Transverse colon (tissue), 4 donors: ENCODE measurements at regions of chr9 and their contacts with region 1.

Region 1: DNA sequence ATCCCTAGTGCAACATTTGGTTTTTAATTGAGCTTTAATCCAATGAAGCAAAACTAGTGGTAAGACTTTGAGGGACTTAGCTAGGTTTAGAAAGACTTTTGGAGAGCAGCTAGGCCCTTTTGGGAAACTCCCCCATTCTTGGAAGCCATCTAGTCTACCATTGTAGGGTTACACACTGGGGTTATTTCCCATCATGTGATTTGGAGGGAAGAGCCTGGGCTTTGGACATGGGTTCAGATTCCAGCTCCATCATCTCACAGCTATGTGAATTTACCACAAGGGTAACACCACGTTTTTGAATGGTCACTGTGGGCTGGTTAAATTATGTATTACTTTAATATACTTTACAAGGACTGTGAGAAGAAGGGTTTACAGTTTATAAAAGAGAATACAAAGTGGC is 18.3 kb upstream of the TNFSF15 start:
- DNase-seq: no peak
- H3K4me3 ChIP-seq: no peak overlapping the region
- H3K27ac ChIP-seq: no peak overlapping the region
- H3K4me1 ChIP-seq: no peaks in the 10 kb centered on the region
- H3K27me3 ChIP-seq: no peaks in the 10 kb centered on the region
- CTCF ChIP-seq: no peak
- EP300 ChIP-seq: no peak
- POLR2A ChIP-seq: no peak

Region 2: DNA sequence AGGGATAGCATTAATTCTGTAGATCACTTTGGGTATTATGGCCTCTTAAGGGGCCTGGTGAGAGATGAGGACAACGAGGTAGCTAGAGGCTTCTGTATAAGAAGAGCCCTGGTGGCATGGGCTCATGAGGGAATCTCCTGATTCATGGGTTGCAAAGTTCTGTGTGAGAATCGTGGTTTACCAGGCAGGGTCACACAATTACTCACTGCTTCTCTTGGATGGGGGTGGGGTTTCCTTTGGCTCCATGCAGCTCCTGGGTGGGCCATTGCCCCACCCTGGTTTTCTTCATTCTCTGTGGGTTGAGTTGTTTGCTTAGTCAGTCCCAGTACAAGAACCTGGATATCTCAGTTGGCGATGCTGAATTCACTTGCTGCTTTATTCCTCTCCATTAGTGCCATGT is 12.7 kb after region 1 on chr9:
- in situ Hi-C with region 1: no loop called
- intact Hi-C with region 1: loop called (anchors 1 kb)
- DNase-seq: no peak
- H3K4me3 ChIP-seq: no peak overlapping the region
- H3K27ac ChIP-seq: no peak overlapping the region
- H3K4me1 ChIP-seq: no peaks in the 10 kb centered on the region
- H3K27me3 ChIP-seq: no peaks in the 10 kb centered on the region
- CTCF ChIP-seq: no peak
- EP300 ChIP-seq: no peak
- POLR2A ChIP-seq: no peak

Region 3: DNA sequence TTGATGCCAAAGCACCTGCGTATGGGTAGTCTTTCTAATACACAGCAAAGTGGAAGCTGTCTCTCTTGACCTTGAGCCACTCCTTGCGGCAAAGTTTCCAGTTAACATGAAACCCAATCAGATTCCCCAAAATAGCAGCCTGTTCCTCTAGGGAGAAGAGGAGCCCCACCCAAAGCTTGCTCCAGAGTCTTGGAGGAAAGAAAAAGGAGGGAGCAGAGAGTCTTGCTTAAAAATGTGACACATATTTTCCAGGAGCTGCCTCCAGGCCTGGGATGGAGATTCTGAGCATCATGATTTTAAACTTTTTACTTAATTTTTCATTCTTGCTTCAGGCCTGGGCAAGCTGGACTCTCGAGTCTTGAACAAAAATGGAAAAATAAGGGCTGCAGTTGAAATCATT is 517.3 kb after region 1 on chr9:
- in situ Hi-C with region 1: no loop called
- intact Hi-C with region 1: no loop called
- DNase-seq: no peak
- H3K4me3 ChIP-seq: no peak overlapping the region
- H3K27ac ChIP-seq: no peak overlapping the region
- H3K4me1 ChIP-seq: no peaks in the 10 kb centered on the region
- H3K27me3 ChIP-seq: no peaks in the 10 kb centered on the region
- CTCF ChIP-seq: no peak
- EP300 ChIP-seq: no peak
- POLR2A ChIP-seq: no peak